MCF 10A (cell line): ENCODE measurements at regions of chr15 and their contacts with region 1.

Region 1: DNA sequence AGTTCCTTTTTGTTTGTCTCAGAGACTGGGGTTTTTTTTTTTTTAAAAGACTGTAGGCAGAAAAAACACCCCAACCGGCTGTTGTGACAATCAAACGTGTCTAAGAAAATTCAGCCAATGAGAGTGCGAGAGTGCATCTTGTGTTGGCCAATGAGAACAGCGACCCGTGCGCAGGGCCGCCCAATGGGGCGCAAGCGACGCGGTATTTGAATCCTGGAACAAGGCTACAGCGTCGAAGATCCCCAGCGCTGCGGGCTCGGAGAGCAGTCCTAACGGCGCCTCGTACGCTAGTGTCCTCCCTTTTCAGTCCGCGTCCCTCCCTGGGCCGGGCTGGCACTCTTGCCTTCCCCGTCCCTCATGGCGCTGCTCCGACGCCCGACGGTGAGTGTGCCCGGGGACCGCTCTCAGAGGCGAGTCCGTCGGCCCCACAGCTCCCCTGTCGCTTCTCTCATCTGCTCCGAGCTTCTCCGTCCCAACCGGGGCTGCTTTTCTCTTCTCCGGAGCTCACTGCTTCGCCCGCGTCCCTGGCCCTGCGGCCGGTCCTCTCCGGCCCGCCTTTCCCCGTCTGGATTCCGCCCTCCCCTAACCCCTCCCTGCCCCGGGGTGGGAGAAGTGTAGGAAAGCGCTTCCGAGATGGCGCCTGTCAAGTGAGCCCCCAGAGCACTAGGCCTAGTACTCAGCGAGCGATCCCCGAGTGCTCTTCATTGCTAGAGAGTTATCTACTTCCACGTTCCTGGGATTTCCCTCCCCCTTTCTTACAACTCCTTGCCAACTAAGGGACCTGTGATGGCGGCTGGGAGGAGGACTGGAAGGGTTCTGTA is at the start of gene CCNB2:
- DNase-seq: peak; percentile 96
- H3K4me3 Mint-ChIP-seq: peak within 1 kb of the TSS; percentile 82
- H3K27ac Mint-ChIP-seq: peak within 1 kb of the TSS; percentile 91
- H3K4me1 Mint-ChIP-seq: peaks cover 7% of the 10 kb centered on the region
- H3K27me3 Mint-ChIP-seq: no peaks in the 10 kb centered on the region
- CTCF ChIP-seq: no peak
- total RNA-seq, gene CCNB2: 25.7 and 54.1 TPM in 2 replicates

Region 2: GRCh38 chr15:58889363-58889762 is 215.8 kb before region 1 on chr15:
- CTCF ChIA-PET with region 1: no interaction called
- POLR2A ChIA-PET with region 1: no interaction called
- intact Hi-C with region 1: no loop called
- DNase-seq: no peak
- H3K4me3 Mint-ChIP-seq: no peak overlapping the region
- H3K27ac Mint-ChIP-seq: no peak overlapping the region
- H3K4me1 Mint-ChIP-seq: no peaks in the 10 kb centered on the region
- H3K27me3 Mint-ChIP-seq: no peaks in the 10 kb centered on the region
- CTCF ChIP-seq: no peak

Region 3: DNA sequence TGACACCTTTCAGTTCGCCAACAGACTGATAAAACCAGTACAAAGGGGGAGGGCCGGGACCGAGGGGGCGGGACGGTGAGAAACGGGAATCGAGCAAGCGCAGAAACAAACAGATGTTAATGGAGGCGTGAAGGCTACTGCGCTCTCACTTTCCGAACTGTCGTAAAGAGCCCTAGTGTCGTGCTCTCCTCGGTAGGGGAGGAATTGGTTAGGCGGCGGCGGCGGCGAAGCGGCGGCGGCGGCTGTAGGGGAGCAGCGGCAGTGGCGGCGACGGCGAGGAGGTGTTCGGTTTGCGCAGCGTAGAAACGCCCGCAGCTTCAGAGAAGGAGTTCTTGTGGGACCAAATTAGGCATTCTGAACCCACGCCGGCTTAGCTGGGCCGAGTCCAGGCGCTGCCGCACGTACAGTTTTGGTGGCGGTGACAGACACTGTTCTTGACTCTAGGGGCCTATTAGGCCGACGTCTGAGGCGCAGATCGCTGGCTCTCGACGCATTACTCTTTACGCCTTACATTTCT is 117.6 kb before region 1 on chr15 and contains the start of gene RNF111:
- CTCF ChIA-PET with region 1: interaction called, 3 read pairs
- POLR2A ChIA-PET with region 1: interaction called, 5 read pairs
- intact Hi-C with region 1: loop called (anchors 5 kb)
- DNase-seq: peak; percentile 96
- H3K4me3 Mint-ChIP-seq: peak within 1 kb of the TSS; percentile 83
- H3K27ac Mint-ChIP-seq: peak within 1 kb of the TSS; percentile 81
- H3K4me1 Mint-ChIP-seq: peaks cover 11% of the 10 kb centered on the region
- H3K27me3 Mint-ChIP-seq: peaks cover 18% of the 10 kb centered on the region
- CTCF ChIP-seq: no peak
- total RNA-seq, gene RNF111: 29.2 and 32.8 TPM in 2 replicates

Region 4: GRCh38 chr15:59169251-59169708 is 64.2 kb after region 1 on chr15:
- CTCF ChIA-PET with region 1: interaction called, 4 read pairs
- POLR2A ChIA-PET with region 1: interaction called, 14 read pairs
- intact Hi-C with region 1: no loop called
- DNase-seq: peak; percentile 76
- H3K4me3 Mint-ChIP-seq: peak overlapping the region; percentile 10
- H3K27ac Mint-ChIP-seq: peak overlapping the region; percentile 98
- H3K4me1 Mint-ChIP-seq: peaks cover 51% of the 10 kb centered on the region
- H3K27me3 Mint-ChIP-seq: no peaks in the 10 kb centered on the region
- CTCF ChIP-seq: no peak

Region 5: GRCh38 chr15:59410391-59410896 is 305.3 kb after region 1 on chr15:
- CTCF ChIA-PET with region 1: no interaction called
- POLR2A ChIA-PET with region 1: no interaction called
- intact Hi-C with region 1: loop called (anchors 1 kb)
- DNase-seq: no peak
- H3K4me3 Mint-ChIP-seq: no peak overlapping the region
- H3K27ac Mint-ChIP-seq: no peak overlapping the region
- H3K4me1 Mint-ChIP-seq: no peaks in the 10 kb centered on the region
- H3K27me3 Mint-ChIP-seq: no peaks in the 10 kb centered on the region
- CTCF ChIP-seq: no peak